ENCODE measurements at regions of chr9 and their contacts with region 1.

Region 1: DNA sequence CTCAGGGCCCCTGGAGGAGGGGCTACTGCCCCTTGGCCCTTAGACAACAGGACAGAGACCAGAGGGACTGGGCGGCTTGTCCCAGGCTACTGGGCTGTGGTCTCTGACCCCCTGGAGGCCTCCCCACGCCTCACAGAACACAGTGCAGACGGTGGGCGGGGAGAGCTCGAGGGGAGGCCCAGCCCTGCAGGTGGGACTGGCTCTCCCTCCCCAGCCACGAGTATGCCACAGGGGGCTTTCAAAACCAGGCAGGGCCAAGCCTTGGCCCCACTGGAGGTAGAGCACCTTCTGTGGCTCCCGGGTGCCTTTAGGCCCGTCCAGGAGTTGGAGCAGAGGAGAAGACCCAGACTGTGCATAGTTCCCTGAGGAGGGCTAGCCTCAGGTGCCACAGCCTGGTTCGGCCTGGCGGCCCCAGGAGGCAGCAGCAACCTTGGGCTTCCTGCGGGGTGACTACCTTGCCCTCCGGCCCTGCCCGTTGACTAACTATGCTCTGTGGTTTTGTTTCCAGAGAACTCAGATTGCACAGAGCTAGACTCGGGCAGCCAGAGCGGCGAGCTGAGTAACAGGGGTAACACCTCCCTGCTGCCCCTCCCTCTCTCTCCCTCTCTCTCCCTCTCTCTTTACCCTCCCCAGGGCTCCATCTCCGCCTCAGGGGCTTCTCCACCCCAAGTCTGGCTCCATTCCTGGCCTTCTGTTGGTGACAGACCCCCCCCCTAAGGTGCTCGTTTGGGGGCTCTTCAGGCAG is 15.5 kb downstream of the CARD19 start:
- DNase-seq: no peak
- H3K4me3 ChIP-seq: no peak overlapping the region
- H3K27ac ChIP-seq: no peak overlapping the region
- H3K4me1 ChIP-seq: peaks cover 0 to 14% (median 9%) of the 10 kb centered on the region in 4 experiments; a peak in 6 of 7 replicates
- H3K27me3 ChIP-seq: no peaks in the 10 kb centered on the region
- CTCF ChIP-seq: no peak
- EP300 ChIP-seq: no peak
- POLR2A ChIP-seq: no peak
- RAD21 ChIP-seq: no peak

Region 2: DNA sequence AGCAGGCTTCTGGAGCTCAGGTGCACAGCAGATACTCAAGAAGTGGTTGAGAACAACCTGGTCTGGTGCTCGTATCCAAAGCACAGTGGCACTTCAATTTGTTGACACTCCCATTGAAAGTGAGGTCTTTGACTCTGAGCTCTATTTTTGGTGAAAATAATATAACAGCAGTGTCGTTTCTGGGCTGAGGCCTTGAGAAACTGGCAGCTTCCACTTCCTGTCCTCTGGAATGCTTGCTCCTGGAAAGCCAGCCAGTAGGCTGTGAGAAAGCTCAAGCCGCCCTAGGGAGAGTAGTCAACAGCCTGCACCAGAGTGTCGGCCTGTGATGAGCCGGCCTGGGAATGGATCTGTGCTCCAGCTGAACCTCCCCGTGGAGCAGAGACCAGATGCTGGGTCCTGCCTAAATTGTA is 59.9 kb before region 1 on chr9:
- CTCF ChIA-PET with region 1: interaction called, 10 read pairs
- POLR2A ChIA-PET with region 1: no interaction called
- DNase-seq: no peak
- H3K4me3 ChIP-seq: no peak overlapping the region
- H3K27ac ChIP-seq: no peak overlapping the region
- H3K4me1 ChIP-seq: peaks cover 7 to 13% (median 10%) of the 10 kb centered on the region in 4 experiments
- H3K27me3 ChIP-seq: no peaks in the 10 kb centered on the region; a peak in 2 of 7 replicates
- CTCF ChIP-seq: no peak
- EP300 ChIP-seq: no peak
- POLR2A ChIP-seq: no peak
- RAD21 ChIP-seq: no peak

Region 3: GRCh38 chr9:93082841-93083411 is 28.6 kb before region 1 on chr9:
- CTCF ChIA-PET with region 1: interaction called, 10 read pairs
- POLR2A ChIA-PET with region 1: no interaction called
- DNase-seq: no peak
- H3K4me3 ChIP-seq: no peak overlapping the region
- H3K27ac ChIP-seq: no peak overlapping the region
- H3K4me1 ChIP-seq: no peaks in the 10 kb centered on the region; a peak in 1 of 7 replicates
- H3K27me3 ChIP-seq: no peaks in the 10 kb centered on the region
- CTCF ChIP-seq: no peak
- EP300 ChIP-seq: no peak
- POLR2A ChIP-seq: no peak
- RAD21 ChIP-seq: no peak

Region 4: DNA sequence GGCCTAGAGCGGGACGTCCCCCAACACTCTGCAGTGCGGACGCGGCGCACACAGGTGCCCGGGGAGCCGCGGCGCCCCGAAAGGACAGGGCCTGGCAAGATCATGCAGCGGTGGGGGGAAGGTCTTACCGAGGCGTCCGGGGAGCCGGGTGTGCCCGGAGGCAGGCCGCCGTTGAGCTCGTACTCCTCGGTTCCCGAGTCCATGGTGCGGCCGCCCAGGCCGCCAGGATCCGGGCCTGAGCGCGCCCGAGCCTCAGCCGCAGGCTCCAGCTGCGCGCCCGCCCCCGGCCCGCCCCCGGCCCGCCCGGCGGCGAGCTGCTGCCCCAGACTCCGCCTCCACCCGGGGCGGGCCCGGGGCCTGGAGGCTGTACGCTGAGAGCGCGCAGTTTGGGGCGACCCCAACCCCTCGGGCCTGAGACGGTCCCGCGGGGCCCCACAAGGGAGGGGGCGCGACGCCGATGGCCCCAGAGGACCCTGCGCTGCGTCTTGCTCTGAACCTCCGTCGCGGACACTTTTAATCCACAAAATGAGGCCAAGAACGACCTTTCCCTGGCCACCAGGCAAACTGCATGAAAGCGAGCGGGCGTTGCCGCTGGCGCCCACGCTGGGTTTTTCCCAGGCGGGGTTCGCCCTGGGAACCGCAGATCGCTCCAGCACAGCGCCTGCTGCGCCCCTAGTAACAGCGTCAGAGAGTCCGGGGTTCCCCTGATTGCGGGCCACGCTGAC is 22.6 kb after region 1 on chr9 and contains the start of gene NINJ1:
- CTCF ChIA-PET with region 1: interaction called, 17 read pairs
- POLR2A ChIA-PET with region 1: interaction called, 9 read pairs
- DNase-seq: peak in 1 of 2 experiments; percentile 85
- H3K4me3 ChIP-seq: peak within 1 kb of the TSS; percentile 71 to 86 (median 72)
- H3K27ac ChIP-seq: peak within 1 kb of the TSS; percentile 58; the same call in 1 of the 2 replicates
- H3K4me1 ChIP-seq: peaks cover 0 to 32% (median 18%) of the 10 kb centered on the region in 4 experiments; a peak in 6 of 7 replicates
- H3K27me3 ChIP-seq: peaks cover 0 to 13% (median 10%) of the 10 kb centered on the region in 4 experiments; a peak in 5 of 7 replicates
- CTCF ChIP-seq: no peak
- EP300 ChIP-seq: no peak
- POLR2A ChIP-seq: peak in 1 of 2 experiments; percentile 61; a peak in 2 of 3 replicates
- RAD21 ChIP-seq: no peak
- total RNA-seq, gene NINJ1: 28.2 TPM in 2 replicates

Region 5: DNA sequence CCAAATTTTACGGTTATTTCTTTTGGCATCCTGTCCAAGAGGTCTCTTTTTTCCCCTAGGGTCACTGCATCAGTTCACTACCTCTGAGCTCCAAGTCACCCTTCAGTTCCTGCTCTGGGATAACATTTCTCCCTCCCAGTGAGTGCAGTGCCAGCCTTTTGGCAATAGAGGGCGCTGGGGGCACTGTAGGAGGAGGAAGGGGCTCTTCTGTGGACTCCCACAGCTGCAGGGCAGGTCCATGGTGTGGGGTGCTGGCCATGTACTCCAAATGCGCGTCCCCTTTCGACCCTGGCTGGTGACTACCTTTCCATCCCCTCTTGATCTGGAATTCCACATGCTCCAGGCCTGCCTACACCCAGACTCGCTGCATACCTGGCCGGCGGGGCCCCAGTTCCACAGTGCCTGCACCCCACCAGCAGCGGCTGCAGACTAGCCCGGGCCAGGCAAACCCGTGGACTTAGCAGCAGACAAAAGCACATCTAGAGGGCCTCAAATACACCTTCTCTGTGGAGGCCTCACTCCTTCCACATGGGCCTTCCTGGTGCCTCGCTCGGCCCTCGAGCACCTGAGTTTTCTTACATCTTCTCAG is 42.9 kb after region 1 on chr9:
- CTCF ChIA-PET with region 1: interaction called, 51 read pairs
- POLR2A ChIA-PET with region 1: no interaction called
- DNase-seq: peak in 1 of 2 experiments; percentile 84
- H3K4me3 ChIP-seq: no peak overlapping the region
- H3K27ac ChIP-seq: no peak overlapping the region
- H3K4me1 ChIP-seq: no peaks in the 10 kb centered on the region
- H3K27me3 ChIP-seq: no peaks in the 10 kb centered on the region
- CTCF ChIP-seq: peak; percentile 82 to 89 (median 89)
- EP300 ChIP-seq: no peak
- POLR2A ChIP-seq: no peak
- RAD21 ChIP-seq: peak; percentile 71 to 77

Region 6: DNA sequence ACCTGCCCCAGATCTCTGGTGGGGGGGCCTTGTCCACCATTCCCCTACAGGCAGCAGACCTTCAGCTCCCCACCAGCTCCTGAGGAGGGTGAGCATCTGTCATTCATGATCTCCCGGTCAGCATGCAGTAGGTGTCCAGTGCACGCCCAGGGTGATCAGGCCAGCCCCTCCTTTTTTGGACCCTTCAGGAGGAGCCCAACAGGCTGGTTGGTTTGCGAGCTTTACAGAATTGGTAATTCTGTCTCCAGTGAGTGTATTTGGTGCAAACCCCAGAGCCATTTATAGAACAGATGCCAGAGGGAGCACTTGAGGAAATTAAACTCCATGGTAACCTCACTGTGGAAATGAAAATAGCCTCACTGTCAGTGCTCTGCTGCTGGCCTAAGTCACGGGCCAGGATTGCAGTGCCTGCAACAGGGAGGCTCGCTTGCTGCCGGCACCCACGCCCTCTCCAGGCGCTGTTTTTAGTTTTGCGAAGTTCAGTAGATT is 95.8 kb after region 1 on chr9:
- CTCF ChIA-PET with region 1: no interaction called
- POLR2A ChIA-PET with region 1: no interaction called
- DNase-seq: no peak
- H3K4me3 ChIP-seq: no peak overlapping the region
- H3K27ac ChIP-seq: no peak overlapping the region
- H3K4me1 ChIP-seq: peaks cover 0 to 6% (median 2%) of the 10 kb centered on the region in 4 experiments; a peak in 2 of 7 replicates
- H3K27me3 ChIP-seq: no peaks in the 10 kb centered on the region
- CTCF ChIP-seq: no peak
- EP300 ChIP-seq: no peak
- POLR2A ChIP-seq: no peak
- RAD21 ChIP-seq: no peak

Measured in H1 (cell line).